ENCODE measurements at regions of chr6 and their contacts with region 1.

Region 1: DNA sequence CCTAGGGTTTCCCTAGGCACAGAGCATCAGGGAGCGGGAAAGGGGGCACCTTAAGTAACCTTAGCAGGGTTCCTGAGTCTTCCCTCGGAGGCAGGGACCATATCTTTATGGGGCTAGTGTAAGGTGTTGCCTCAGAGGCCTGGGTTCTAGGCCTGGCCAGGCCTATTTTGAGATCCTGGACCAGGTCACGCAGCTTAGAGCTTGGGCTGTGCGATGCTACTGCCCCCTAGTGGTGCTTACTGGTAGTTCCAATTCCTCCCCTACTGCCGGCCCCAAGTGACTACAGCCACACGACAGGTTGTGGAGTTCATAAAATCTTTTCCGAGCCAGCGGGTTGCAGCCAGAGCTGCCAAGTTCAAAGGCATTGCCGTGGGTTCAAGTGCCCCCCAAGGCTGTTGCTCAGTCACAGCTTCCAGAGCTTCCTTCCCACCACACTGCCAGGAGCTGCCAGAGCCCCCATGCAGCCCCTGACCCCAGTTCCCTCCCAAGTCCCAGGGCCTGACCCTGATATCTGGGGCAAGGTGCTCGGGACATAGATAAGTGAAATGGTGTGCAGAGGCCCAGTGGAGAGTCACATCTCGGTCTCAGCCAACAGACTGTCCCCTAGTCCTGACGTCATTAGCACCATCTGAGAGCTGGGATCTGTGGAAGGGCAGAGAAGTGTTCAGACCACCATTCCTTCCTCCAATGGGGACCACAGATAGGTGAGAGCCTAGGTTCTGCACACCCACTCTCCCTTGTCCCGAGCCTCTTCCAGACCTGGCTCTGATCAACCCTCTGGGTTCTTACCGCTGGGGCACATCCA is 3.3 kb downstream of the LRRC73 start:
- DNase-seq: peak; percentile 61 to 86 (median 78)
- ATAC-seq: peak; percentile 59 to 76
- H3K4me3 Mint-ChIP-seq: no peak overlapping the region
- H3K27ac Mint-ChIP-seq: peak overlapping the region in 7 of 10 donors; percentile 28 to 73 (median 55)
- H3K4me1 Mint-ChIP-seq: peaks cover 10 to 34% (median 20%) of the 10 kb centered on the region in 4 donors
- H3K27me3 Mint-ChIP-seq: peaks cover 14 to 26% (median 18%) of the 10 kb centered on the region in 5 donors

Region 2: DNA sequence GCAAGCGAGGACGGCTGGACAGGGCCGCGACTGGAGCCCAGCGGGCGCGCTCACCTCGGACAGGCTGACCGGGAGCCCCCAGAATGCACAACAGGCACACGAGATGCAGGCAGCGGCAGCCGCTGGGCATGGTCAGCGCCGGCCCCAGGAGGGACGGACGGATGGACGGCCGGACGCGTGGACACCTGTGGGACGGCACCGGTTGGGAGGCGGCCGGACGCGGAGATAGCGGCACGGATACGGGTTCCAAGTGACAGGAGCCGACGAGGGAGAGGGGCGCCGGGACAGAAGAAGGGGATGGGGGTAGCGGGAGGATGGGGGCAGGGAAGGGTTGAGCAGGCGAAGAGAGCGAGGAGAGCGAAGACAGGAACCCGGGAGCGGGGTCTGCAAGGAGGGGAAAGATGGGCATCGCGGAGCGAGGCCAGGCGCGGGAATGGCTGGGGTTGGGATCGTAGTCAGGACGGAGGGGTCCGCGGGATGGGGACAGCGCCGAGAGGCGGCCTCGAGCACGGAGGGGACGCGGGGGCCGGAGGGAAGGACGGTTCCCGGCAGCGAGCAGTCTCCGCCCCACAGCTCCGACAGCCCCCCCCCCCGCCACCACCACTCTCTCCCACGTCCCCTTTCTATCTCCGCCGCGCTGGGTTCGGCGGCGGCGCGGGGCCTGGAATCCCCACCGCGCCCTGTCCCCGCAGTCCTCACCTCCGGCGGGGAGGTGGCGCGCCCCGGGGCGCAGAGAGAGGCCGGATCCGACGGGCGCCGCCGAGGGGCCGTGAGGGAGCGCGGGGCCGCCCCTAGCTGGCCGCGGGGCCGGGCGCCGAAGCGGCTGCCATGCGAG is 52.0 kb before region 1 on chr6:
- POLR2A ChIA-PET with region 1: interaction called, 13 read pairs
- DNase-seq: peak in 9 of 10 donors; percentile 8 to 43 (median 32)
- ATAC-seq: peak; percentile 56 to 59
- H3K4me3 Mint-ChIP-seq: peak overlapping the region; percentile 77 to 90 (median 84)
- H3K27ac Mint-ChIP-seq: peak overlapping the region in 8 of 10 donors; percentile 31 to 93 (median 80)
- H3K4me1 Mint-ChIP-seq: peaks cover 8 to 29% (median 16%) of the 10 kb centered on the region in 4 donors
- H3K27me3 Mint-ChIP-seq: peaks cover 0 to 4% (median 0%) of the 10 kb centered on the region in 5 donors

Region 3: GRCh38 chr6:43477235-43478007 is 29.4 kb before region 1 on chr6 and contains the start of gene TJAP1:
- POLR2A ChIA-PET with region 1: interaction called, 11 read pairs
- DNase-seq: peak; percentile 92 to 97 (median 96)
- ATAC-seq: peak; percentile 98 to 99
- H3K4me3 Mint-ChIP-seq: peak within 1 kb of the TSS; percentile 90 to 99 (median 96)
- H3K27ac Mint-ChIP-seq: peak within 1 kb of the TSS; percentile 91 to 100 (median 96)
- H3K4me1 Mint-ChIP-seq: peaks cover 22 to 47% (median 41%) of the 10 kb centered on the region in 4 donors
- H3K27me3 Mint-ChIP-seq: no peaks in the 10 kb centered on the region
- polyA plus RNA-seq, gene TJAP1: 5.1 to 12.1 (median 8.4) TPM

Region 4: GRCh38 chr6:43516697-43517504 is 10.0 kb after region 1 on chr6 and contains the starts of genes POLR1C and YIPF3:
- POLR2A ChIA-PET with region 1: interaction called, 17 read pairs
- DNase-seq: peak; percentile 87 to 98 (median 96)
- ATAC-seq: peak; percentile 95 to 96
- H3K4me3 Mint-ChIP-seq: no peak within 1 kb of the TSS
- H3K27ac Mint-ChIP-seq: peak within 1 kb of the TSS in 1 of 10 donors; percentile 34
- H3K4me1 Mint-ChIP-seq: peaks cover 5 to 17% (median 10%) of the 10 kb centered on the region in 4 donors
- H3K27me3 Mint-ChIP-seq: no peaks in the 10 kb centered on the region
- polyA plus RNA-seq, gene POLR1C: 9.4 to 23.2 (median 14.6) TPM
- polyA plus RNA-seq, gene YIPF3: 58.4 to 70.4 (median 68.3) TPM

Region 5: GRCh38 chr6:43541774-43542471 is 35.1 kb after region 1 on chr6:
- POLR2A ChIA-PET with region 1: no interaction called
- DNase-seq: no peak
- ATAC-seq: no peak
- H3K4me3 Mint-ChIP-seq: no peak overlapping the region
- H3K27ac Mint-ChIP-seq: peak overlapping the region in 1 of 10 donors; percentile 44
- H3K4me1 Mint-ChIP-seq: peaks cover 0 to 2% (median under 1%) of the 10 kb centered on the region in 4 donors
- H3K27me3 Mint-ChIP-seq: no peaks in the 10 kb centered on the region

Region 6: GRCh38 chr6:43746613-43747102 is 239.8 kb after region 1 on chr6:
- POLR2A ChIA-PET with region 1: no interaction called
- DNase-seq: no peak
- ATAC-seq: no peak
- H3K4me3 Mint-ChIP-seq: no peak overlapping the region
- H3K27ac Mint-ChIP-seq: no peak overlapping the region
- H3K4me1 Mint-ChIP-seq: no peaks in the 10 kb centered on the region
- H3K27me3 Mint-ChIP-seq: peaks cover 3 to 16% (median 11%) of the 10 kb centered on the region in 5 donors